ENCODE measurements at regions of chr6 and their contacts with region 1.

Region 1: GRCh38 chr6:95866732-95867131 is 149.0 kb upstream of the FUT9 start:
- DNase-seq: no peak
- ATAC-seq: no peak

Region 2: DNA sequence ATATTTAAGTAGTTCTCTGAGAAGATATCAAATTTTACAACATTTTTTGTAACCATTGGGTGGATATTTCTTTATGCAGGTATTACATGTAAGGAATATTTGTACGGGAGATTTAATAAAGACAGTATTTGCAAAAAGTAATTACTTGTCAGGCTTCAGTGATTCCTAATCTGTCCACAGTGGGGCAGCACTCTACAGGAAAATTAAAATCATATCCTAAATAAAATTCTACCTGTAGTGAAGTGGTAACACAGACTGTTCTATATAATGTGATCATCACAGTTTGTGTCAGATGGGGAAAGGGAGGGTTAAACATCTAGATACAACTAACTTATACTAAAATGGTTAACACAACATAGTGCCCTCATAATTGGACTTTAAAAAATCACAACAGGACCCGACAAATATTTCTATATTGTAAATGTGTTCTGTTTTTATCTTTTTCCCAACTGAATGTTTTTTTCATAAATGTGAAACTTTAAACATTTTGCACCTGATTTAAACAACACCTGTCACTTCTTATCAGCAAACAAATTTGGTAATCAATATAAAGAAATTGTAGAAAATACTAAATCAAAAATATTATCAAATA is 435.0 kb before region 1 on chr6:
- intact Hi-C with region 1: loop called (anchors 10 kb)
- DNase-seq: peak; percentile 22
- ATAC-seq: no peak

Region 3: GRCh38 chr6:97102145-97102790 is 1235.5 kb after region 1 on chr6:
- intact Hi-C with region 1: no loop called
- DNase-seq: no peak
- ATAC-seq: no peak